CD14-positive monocyte (primary cell): ENCODE measurements at regions of chr11 and their contacts with region 1.

Region 1: GRCh38 chr11:7513234-7514098 is at the start of gene PPFIBP2:
- DNase-seq: peak; percentile 75 to 82 (median 76)
- H3K4me3 ChIP-seq: peak within 1 kb of the TSS; percentile 86 to 95 (median 92)
- H3K4me3 Mint-ChIP-seq: peak within 1 kb of the TSS; percentile 93
- H3K27ac ChIP-seq: peak within 1 kb of the TSS; percentile 91 to 98
- H3K27ac Mint-ChIP-seq: peak within 1 kb of the TSS; percentile 95 to 98 (median 97)
- H3K4me1 ChIP-seq: peaks cover 51 to 60% of the 10 kb centered on the region in 2 donors
- H3K4me1 Mint-ChIP-seq: peaks cover 61% of the 10 kb centered on the region
- H3K27me3 ChIP-seq: no peaks in the 10 kb centered on the region
- H3K27me3 Mint-ChIP-seq: peaks cover 0 to 7% (median 6%) of the 10 kb centered on the region in 3 donors
- CTCF ChIP-seq: peak; percentile 81
- polyA plus RNA-seq, gene PPFIBP2: 5.9 to 41.6 (median 8.6) TPM

Region 2: DNA sequence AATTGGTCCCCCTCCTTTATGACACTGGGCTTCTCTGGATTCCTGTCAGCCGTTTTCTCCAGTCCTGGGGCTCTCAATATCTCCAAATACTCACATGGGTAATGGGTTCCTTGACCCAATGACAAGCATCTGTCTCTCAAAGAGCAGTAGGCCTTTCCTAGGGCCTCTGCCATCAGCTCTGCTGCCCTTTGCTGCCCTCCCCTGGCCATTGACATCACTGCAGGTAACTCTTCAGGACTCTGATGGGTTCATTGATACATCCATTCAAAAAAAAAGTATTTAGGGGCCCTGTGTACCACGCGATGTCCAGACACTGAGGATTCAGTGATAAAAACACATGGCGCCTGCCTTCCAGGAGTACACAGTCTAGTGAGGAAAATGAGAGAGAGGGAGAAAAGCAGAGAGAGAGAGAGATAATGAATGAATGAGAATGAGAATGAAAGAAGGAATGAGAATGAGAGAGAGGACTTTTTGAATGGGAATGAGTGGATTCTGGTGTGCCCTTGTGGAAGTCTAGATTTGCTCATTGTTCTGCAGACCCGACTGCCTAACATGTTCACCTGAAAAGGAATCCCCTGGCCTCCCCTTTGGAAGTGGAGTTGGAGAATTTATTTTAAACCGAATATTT is 70.8 kb before region 1 on chr11:
- intact Hi-C with region 1: loop called in 1 of 2 experiments (anchors 10 kb)
- DNase-seq: peak; percentile 45 to 67 (median 56)
- H3K4me3 ChIP-seq: no peak overlapping the region
- H3K4me3 Mint-ChIP-seq: no peak overlapping the region
- H3K27ac ChIP-seq: no peak overlapping the region
- H3K27ac Mint-ChIP-seq: no peak overlapping the region
- H3K4me1 ChIP-seq: peaks cover 18 to 24% of the 10 kb centered on the region in 2 donors
- H3K4me1 Mint-ChIP-seq: peaks cover 26% of the 10 kb centered on the region
- H3K27me3 ChIP-seq: no peaks in the 10 kb centered on the region
- H3K27me3 Mint-ChIP-seq: peaks cover 2 to 13% (median 4%) of the 10 kb centered on the region in 3 donors
- CTCF ChIP-seq: peak; percentile 89

Region 3: DNA sequence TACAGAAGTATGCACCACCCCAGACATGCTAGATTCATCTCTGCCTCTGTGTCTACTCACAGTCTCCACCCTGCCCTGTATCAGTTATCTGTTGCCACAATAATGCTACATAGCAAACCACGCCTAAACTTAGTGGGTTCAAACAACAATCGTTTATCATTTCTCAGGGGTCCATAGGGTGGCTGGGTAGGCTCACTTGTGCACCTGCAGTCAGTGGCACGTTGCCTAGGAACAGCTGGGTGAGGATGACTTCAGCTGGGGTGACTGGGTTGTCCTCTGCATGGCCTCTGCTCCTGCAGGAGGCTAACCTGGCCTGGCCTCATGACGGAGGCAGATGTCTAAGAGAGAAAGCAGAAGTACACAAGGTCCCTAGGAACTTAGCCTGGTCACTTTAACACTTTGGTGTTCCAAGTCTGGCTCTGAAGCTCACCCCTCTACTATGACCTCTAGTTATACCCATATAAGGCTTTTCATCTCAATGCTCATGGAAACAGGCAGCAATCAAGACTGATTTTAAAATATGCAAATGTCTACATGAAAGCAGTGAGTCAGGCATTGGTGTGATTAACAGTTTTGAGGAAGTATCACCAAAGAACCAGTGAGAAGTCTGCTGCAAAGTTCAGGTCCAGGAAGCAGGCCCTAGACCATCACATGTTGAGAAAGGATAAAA is 17.4 kb before region 1 on chr11:
- intact Hi-C with region 1: loop called in 1 of 2 experiments (anchors 1 kb)
- DNase-seq: peak; percentile 81 to 92 (median 91)
- H3K4me3 ChIP-seq: no peak overlapping the region
- H3K4me3 Mint-ChIP-seq: peak overlapping the region in 1 of 2 donors; percentile 9
- H3K27ac ChIP-seq: peak overlapping the region; percentile 23 to 71
- H3K27ac Mint-ChIP-seq: peak overlapping the region; percentile 73 to 94 (median 87)
- H3K4me1 ChIP-seq: peaks cover 34 to 36% of the 10 kb centered on the region in 2 donors
- H3K4me1 Mint-ChIP-seq: peaks cover 33% of the 10 kb centered on the region
- H3K27me3 ChIP-seq: no peaks in the 10 kb centered on the region
- H3K27me3 Mint-ChIP-seq: peaks cover 0 to 3% (median 3%) of the 10 kb centered on the region in 3 donors
- CTCF ChIP-seq: no peak

Region 4: DNA sequence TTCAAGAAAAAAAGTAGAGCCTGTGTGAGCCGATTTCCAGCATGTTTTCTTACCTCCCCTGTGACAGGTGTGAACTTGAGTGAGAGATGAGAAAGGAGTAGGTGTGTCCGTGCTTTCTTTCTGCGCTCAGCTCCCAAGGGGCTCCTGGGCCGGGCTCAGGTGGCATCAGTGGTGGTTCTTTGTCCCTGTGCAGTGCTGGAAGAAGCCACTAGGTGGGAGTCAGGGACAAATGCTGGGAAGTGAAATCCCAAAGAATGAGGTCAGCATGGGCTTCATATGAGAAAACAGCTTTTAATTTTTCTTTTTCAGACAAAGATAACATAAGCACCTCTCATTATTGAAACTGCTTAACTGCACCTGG is 58.2 kb after region 1 on chr11:
- intact Hi-C with region 1: loop called in 1 of 2 experiments (anchors 10 kb)
- DNase-seq: peak in 2 of 3 donors; percentile 52 to 54
- H3K4me3 ChIP-seq: no peak overlapping the region
- H3K4me3 Mint-ChIP-seq: no peak overlapping the region
- H3K27ac ChIP-seq: no peak overlapping the region
- H3K27ac Mint-ChIP-seq: peak overlapping the region in 1 of 7 donors; percentile 36
- H3K4me1 ChIP-seq: peaks cover 0 to 21% of the 10 kb centered on the region in 2 donors
- H3K4me1 Mint-ChIP-seq: peaks cover 27% of the 10 kb centered on the region
- H3K27me3 ChIP-seq: peaks cover 0 to 28% of the 10 kb centered on the region in 2 donors
- H3K27me3 Mint-ChIP-seq: peaks cover 18 to 36% (median 32%) of the 10 kb centered on the region in 3 donors
- CTCF ChIP-seq: peak; percentile 90

Region 5: GRCh38 chr11:7592711-7593110 is 79.2 kb after region 1 on chr11:
- intact Hi-C with region 1: loop called in 1 of 2 experiments (anchors 10 kb)
- DNase-seq: peak; percentile 84 to 93 (median 92)
- H3K4me3 ChIP-seq: peak overlapping the region in 2 of 3 experiments; percentile 42 to 71
- H3K4me3 Mint-ChIP-seq: peak overlapping the region; percentile 63 to 85
- H3K27ac ChIP-seq: peak overlapping the region; percentile 87 to 90
- H3K27ac Mint-ChIP-seq: peak overlapping the region; percentile 92 to 98 (median 96)
- H3K4me1 ChIP-seq: peaks cover 48 to 73% of the 10 kb centered on the region in 2 donors
- H3K4me1 Mint-ChIP-seq: peaks cover 71% of the 10 kb centered on the region
- H3K27me3 ChIP-seq: no peaks in the 10 kb centered on the region
- H3K27me3 Mint-ChIP-seq: peaks cover 0 to 5% (median 0%) of the 10 kb centered on the region in 3 donors
- CTCF ChIP-seq: no peak